ENCODE measurements at regions of chr6 and their contacts with region 1.

Region 1: GRCh38 chr6:163579880-163580295 is 165.4 kb downstream of the QKI start:
- DNase-seq: peak in 3 of 4 experiments; percentile 25 to 70 (median 39)
- ATAC-seq: peak; percentile 71
- H3K4me3 ChIP-seq: no peak overlapping the region
- H3K27ac ChIP-seq: peak overlapping the region; percentile 75
- H3K4me1 ChIP-seq: peaks cover 6 to 38% of the 10 kb centered on the region in 2 experiments
- H3K27me3 ChIP-seq: no peaks in the 10 kb centered on the region
- CTCF ChIP-seq: peak; percentile 32 to 54 (median 46); a peak in 4 of 6 replicates
- EP300 ChIP-seq: peak; percentile 63; the same call in 1 of the 2 replicates
- POLR2A ChIP-seq: no peak
- RAD21 ChIP-seq: peak in 1 of 2 experiments; percentile 59

Region 2: GRCh38 chr6:163419413-163420288 is 160.2 kb before region 1 on chr6:
- CTCF ChIA-PET with region 1: no interaction called
- POLR2A ChIA-PET with region 1: interaction called, 4 read pairs
- in situ Hi-C with region 1: no loop called
- intact Hi-C with region 1: loop called (anchors 2 kb)
- DNase-seq: peak in 1 of 4 experiments; percentile 27
- ATAC-seq: peak; percentile 46
- H3K4me3 ChIP-seq: peak overlapping the region; percentile 17; the same call in 1 of the 2 replicates
- H3K27ac ChIP-seq: peak overlapping the region; percentile 18; the same call in 2 of the 3 replicates
- H3K4me1 ChIP-seq: peaks cover 10 to 19% of the 10 kb centered on the region in 2 experiments
- H3K27me3 ChIP-seq: no peaks in the 10 kb centered on the region
- CTCF ChIP-seq: no peak
- EP300 ChIP-seq: no peak
- POLR2A ChIP-seq: no peak
- RAD21 ChIP-seq: peak in 1 of 2 experiments; percentile 20; a peak in 2 of 4 replicates

Region 3: DNA sequence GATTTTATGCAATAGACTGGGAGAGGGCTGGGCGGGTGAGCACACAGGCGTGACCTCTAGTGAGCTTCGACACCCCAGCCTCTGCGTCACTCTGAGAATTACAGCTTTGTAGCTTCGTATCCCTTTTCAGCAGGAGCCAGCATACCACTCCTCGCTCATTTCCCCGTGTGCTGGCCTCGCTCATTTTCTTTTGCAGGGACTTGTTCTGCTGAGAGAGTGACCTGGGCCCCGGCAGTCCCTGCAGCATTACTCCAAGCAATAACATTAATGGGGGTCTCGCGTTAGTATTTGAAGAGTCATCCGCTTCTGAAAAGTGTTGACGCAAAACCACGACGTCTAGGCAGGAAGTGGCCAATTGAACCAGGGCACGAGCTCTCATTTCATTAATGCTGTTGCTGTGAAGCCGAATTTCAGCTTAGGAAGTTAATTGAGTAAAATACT is 28.3 kb after region 1 on chr6:
- CTCF ChIA-PET with region 1: no interaction called
- POLR2A ChIA-PET with region 1: no interaction called
- in situ Hi-C with region 1: no loop called
- intact Hi-C with region 1: no loop called
- DNase-seq: no peak
- ATAC-seq: no peak; the same call in 1 of the 3 replicates
- H3K4me3 ChIP-seq: no peak overlapping the region
- H3K27ac ChIP-seq: no peak overlapping the region
- H3K4me1 ChIP-seq: no peaks in the 10 kb centered on the region
- H3K27me3 ChIP-seq: no peaks in the 10 kb centered on the region
- CTCF ChIP-seq: no peak
- EP300 ChIP-seq: no peak
- POLR2A ChIP-seq: no peak
- RAD21 ChIP-seq: no peak

Region 4: DNA sequence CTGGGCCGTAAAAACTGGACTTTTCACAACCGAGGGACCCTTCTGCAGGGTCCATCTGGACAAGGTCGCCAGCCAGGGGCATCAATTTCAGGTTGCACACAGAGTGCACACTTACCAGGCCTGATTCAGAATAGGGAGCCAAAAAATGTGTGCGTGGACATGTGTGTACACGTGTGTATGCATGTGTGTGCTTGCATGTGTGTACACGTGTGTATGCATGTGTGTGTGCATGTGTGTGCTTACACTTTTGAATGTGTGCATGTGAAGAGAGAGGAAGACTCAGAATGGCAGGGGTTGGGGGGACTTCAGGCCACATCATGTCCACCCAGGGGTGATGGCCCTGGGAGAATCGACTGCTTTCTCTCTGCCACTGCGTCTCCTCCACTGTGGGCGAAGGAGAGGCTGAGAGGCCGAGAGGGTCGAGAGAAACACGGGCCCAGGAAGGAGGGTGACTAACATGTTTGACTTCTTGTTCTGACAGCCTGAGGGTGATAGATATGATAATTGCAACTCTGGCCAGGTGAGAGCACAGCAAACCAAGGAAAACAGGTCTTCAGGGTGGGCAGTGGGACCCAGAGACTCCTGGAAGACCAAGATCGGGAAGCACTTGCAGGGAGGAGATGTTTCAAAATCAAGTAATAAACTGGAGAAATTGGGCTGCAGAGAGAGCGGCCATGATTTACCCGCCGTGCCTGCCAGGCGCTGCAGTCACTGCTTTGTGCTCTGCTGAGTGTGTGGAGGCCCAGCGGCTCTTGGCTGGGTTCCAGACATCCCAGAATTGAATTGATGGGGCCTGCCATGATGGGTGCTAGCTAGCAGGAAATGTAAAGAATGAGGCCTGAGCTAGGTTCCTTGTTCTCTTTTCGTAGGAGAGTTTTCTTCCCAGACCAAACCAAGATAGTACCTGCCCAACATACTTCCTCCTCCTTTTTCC is 145.4 kb after region 1 on chr6:
- CTCF ChIA-PET with region 1: no interaction called
- POLR2A ChIA-PET with region 1: no interaction called
- in situ Hi-C with region 1: no loop called
- intact Hi-C with region 1: no loop called
- DNase-seq: no peak
- ATAC-seq: 0 out of 3 replicates have a peak, but pooled peaks have one; percentile 4
- H3K4me3 ChIP-seq: no peak overlapping the region
- H3K27ac ChIP-seq: no peak overlapping the region
- H3K4me1 ChIP-seq: peaks cover 9 to 10% of the 10 kb centered on the region in 2 experiments; a peak in 4 of 5 replicates
- H3K27me3 ChIP-seq: peaks cover 5 to 34% of the 10 kb centered on the region in 2 experiments; a peak in 3 of 5 replicates
- CTCF ChIP-seq: no peak
- EP300 ChIP-seq: no peak
- POLR2A ChIP-seq: no peak
- RAD21 ChIP-seq: no peak

Region 5: DNA sequence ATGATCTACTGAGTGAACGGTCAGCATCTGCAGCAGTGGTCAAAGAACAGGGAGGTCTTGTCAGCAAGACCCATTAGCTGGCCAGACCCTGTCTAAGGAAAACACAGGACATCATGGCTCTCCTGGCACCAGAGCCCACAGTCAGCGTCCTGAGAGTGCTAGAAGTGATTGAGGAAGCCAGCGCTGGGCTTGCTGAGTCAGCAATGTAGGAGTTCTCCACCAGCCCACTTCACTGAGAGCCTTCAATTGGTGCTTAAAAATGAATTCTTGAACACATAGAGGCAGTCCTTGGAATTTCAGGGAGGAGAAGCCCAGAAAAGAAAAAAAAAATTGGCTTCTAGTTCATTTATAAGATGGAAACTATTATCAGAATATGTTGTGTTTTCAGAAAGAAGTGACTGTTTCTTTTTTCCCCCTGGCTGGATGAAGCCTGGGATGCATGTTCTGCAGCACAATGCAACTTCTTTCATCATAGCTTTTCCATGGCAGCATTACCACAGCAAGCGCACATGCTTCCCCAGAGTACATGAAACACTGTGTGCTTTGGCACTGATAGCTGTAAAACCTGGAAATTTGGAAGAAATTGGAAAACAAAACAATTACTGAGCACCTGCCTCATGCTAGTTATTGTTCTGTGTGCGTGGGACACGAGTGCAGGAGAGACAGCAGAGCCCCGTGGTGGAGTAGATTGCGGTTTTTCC is 829.6 kb after region 1 on chr6:
- CTCF ChIA-PET with region 1: no interaction called
- POLR2A ChIA-PET with region 1: no interaction called
- in situ Hi-C with region 1: no loop called
- intact Hi-C with region 1: no loop called
- DNase-seq: no peak
- ATAC-seq: no peak; the same call in 1 of the 3 replicates
- H3K4me3 ChIP-seq: no peak overlapping the region
- H3K27ac ChIP-seq: no peak overlapping the region
- H3K4me1 ChIP-seq: no peaks in the 10 kb centered on the region; a peak in 2 of 5 replicates
- H3K27me3 ChIP-seq: no peaks in the 10 kb centered on the region
- CTCF ChIP-seq: no peak
- EP300 ChIP-seq: no peak
- POLR2A ChIP-seq: no peak
- RAD21 ChIP-seq: no peak

Measured in K562 (cell line).